Endothelial cell of umbilical vein (primary cell): ENCODE measurements at regions of chr18 and their contacts with region 1.

Region 1: DNA sequence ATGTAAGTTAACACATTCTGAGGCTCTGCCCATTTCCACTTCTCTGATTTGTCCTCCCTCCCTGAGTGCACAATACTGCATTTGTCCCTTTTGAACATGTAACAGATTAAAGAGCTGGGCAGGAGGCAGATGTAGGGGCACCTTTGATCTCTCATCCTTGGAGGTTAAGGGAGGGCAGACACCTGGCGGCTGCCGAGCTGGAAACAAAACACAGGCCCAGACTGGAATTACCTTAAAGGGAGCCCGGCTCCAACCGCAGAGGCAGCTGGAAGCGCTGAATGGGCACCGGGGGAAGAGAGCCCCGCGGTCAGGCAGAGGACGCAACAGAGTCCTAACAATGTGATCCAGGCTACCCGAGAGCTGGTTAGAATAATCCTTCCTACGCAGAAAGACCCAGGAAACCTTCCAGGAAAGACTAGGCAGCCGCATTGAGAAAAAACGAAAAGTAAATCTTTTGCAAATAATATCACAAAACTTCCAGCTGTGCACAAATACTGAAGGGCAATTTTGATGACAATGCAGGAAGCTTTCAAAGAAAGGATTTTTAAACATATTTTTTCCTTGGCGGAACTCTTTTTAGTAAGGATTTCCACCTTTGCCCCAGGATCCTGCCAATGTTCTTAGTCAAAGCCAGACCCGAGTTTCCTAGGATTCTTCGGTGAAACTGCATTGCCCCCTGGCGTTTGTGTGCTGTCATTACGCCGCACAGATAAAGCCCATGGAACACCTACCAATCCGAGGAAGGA is 216.0 kb downstream of the TGIF1 start:
- DNase-seq: peak; percentile 90
- H3K4me3 ChIP-seq: peak overlapping the region in 1 of 3 experiments; percentile 34
- H3K27ac ChIP-seq: peak overlapping the region; percentile 90
- H3K4me1 ChIP-seq: peaks cover 16% of the 10 kb centered on the region
- H3K27me3 ChIP-seq: no peaks in the 10 kb centered on the region
- CTCF ChIP-seq: peak; percentile 86 to 91
- POLR2A ChIP-seq: no peak

Region 2: GRCh38 chr18:3297025-3297984 is 368.6 kb before region 1 on chr18:
- CTCF ChIA-PET with region 1: interaction called, 14 read pairs
- POLR2A ChIA-PET with region 1: no interaction called
- dilution Hi-C with region 1: no loop called
- intact Hi-C with region 1: no loop called
- DNase-seq: peak; percentile 57
- H3K4me3 ChIP-seq: peak overlapping the region in 2 of 3 experiments; percentile 53 to 54
- H3K27ac ChIP-seq: no peak overlapping the region
- H3K4me1 ChIP-seq: no peaks in the 10 kb centered on the region
- H3K27me3 ChIP-seq: peaks cover 0 to 10% of the 10 kb centered on the region in 2 experiments
- CTCF ChIP-seq: peak; percentile 64 to 67
- POLR2A ChIP-seq: no peak

Region 3: DNA sequence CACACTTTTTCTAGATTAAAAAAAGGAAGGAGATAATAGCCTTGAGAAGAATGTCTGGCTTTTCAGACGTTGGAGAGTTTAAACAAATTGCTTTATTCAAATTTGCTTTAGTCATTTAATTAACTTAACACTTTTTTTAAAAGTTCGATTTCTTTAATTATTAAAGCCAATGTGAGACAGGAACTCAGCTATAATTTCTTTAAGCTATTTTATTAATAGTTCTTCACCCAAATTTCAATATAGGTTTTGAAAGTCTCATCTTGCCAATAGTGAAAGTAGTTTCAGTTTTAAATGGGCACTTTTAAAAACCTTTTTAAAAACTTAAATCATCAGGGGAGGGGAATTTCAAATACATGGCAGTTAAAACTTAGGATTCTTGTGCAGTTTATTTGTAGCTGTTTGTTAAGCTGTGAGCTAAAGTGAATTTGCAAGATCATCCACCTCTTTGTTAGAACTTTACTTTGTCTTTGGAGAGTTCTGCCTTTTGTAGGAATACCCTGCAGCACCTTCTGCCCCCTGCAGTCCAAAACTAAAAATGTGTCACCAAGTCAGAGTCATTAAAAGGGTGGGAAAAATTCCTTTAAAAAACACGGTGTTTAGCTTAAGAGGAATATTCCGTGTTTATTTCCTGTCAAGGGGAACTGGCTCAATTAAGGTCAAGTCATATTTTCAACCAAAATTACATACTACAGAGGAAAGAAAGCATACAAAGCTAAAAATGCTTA is 211.4 kb before region 1 on chr18:
- CTCF ChIA-PET with region 1: interaction called, 58 read pairs
- POLR2A ChIA-PET with region 1: interaction called, 6 read pairs
- dilution Hi-C with region 1: no loop called
- intact Hi-C with region 1: loop called (anchors 1 kb)
- DNase-seq: peak; percentile 95
- H3K4me3 ChIP-seq: peak overlapping the region; percentile 43 to 92 (median 90)
- H3K27ac ChIP-seq: peak overlapping the region; percentile 98
- H3K4me1 ChIP-seq: peaks cover 54% of the 10 kb centered on the region
- H3K27me3 ChIP-seq: no peaks in the 10 kb centered on the region
- CTCF ChIP-seq: peak; percentile 51 to 60
- POLR2A ChIP-seq: no peak

Region 4: GRCh38 chr18:3604498-3605408 is 61.2 kb before region 1 on chr18:
- CTCF ChIA-PET with region 1: interaction called, 58 read pairs
- POLR2A ChIA-PET with region 1: interaction called, 37 read pairs
- dilution Hi-C with region 1: no loop called
- intact Hi-C with region 1: loop called (anchors 1 kb)
- DNase-seq: peak; percentile 90
- H3K4me3 ChIP-seq: peak overlapping the region; percentile 41 to 95 (median 83)
- H3K27ac ChIP-seq: peak overlapping the region; percentile 96
- H3K4me1 ChIP-seq: peaks cover 43% of the 10 kb centered on the region
- H3K27me3 ChIP-seq: no peaks in the 10 kb centered on the region
- CTCF ChIP-seq: no peak
- POLR2A ChIP-seq: peak; percentile 32

Region 5: DNA sequence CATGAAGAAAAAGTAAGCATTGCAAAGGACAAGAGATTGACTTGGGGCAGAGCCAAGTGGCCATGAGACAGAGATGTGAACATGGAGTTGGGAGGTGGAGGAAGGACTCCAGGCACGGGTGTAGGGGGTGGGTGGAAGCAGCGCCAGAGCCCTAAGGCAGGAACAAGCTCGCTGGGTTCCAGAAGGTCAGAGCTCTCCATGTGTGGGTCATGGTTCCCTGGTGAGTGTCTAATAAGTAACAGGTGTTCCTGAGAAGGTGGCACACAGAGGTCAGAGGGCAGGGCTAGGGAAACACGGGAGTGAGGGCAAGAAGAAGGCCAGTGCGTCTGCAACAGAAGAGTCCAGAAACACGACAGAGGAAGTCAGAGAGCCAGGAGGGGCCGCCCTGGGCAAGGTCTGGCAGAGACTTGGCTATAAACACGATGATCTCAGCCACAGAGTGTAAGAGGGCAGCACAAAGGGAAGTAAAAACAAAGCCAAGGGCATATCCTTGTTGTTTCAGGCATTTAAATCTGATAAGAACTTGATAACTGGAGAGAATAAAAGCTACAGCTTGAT is 44.8 kb after region 1 on chr18:
- CTCF ChIA-PET with region 1: interaction called, 18 read pairs
- POLR2A ChIA-PET with region 1: no interaction called
- dilution Hi-C with region 1: no loop called
- intact Hi-C with region 1: no loop called
- DNase-seq: peak; percentile 96
- H3K4me3 ChIP-seq: no peak overlapping the region
- H3K27ac ChIP-seq: peak overlapping the region; percentile 90
- H3K4me1 ChIP-seq: peaks cover 27% of the 10 kb centered on the region
- H3K27me3 ChIP-seq: no peaks in the 10 kb centered on the region
- CTCF ChIP-seq: no peak
- POLR2A ChIP-seq: peak; percentile 93

Region 6: DNA sequence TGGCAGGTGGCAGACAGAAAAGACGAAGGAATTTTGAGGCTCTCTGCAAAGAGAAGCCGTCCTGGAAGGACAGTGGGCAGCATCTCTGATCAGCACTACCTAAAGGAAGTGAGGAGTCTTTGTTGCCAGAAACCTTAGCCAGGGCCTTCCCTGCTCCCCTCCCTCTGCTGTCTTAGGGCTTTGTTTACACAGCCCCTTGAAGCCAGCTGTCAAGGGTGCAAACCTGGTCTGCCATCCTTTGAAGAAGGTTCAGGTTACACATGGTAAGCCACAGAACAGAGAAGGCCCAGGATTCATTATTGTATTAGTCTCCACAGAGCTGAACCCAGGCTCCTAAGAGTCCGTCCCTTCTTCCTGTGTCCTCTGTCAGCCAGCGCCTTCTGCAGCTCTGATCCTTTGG is 140.7 kb after region 1 on chr18:
- CTCF ChIA-PET with region 1: no interaction called
- POLR2A ChIA-PET with region 1: no interaction called
- dilution Hi-C with region 1: no loop called
- intact Hi-C with region 1: no loop called
- DNase-seq: no peak
- H3K4me3 ChIP-seq: no peak overlapping the region
- H3K27ac ChIP-seq: no peak overlapping the region
- H3K4me1 ChIP-seq: no peaks in the 10 kb centered on the region
- H3K27me3 ChIP-seq: peaks cover 0 to 3% of the 10 kb centered on the region in 2 experiments
- CTCF ChIP-seq: no peak
- POLR2A ChIP-seq: no peak

Region 7: DNA sequence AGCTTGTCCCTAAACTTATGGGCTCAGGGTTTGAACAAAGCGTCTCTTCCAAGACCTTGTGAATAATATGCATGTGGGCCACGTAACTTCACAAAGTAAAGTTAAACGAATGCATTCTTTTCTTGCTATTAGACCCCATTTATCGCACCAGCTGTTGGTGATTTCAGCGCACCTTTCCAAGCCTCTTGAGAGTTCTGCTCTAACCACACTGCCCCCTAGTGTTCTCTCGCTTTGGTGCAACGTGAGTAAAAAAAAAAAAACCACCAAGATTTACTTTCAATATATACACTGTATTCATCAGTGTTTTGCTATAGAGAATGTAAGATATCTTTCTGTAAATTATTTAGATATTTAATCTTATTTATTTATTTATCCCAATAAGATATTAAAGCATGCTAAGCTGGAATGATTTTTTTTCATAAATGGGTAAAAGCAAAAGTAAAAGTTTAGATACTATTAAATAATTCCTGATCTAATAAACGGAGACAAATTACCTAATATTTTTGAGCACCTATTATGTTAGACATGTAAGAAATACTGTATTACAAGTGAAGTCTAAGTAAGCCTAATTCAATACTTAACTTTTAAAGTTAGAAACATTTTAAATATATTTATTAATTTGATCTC is 329.6 kb after region 1 on chr18:
- CTCF ChIA-PET with region 1: interaction called, 19 read pairs
- POLR2A ChIA-PET with region 1: no interaction called
- dilution Hi-C with region 1: no loop called
- intact Hi-C with region 1: loop called (anchors 1 kb)
- DNase-seq: peak; percentile 78
- H3K4me3 ChIP-seq: no peak overlapping the region
- H3K27ac ChIP-seq: no peak overlapping the region
- H3K4me1 ChIP-seq: no peaks in the 10 kb centered on the region
- H3K27me3 ChIP-seq: no peaks in the 10 kb centered on the region
- CTCF ChIP-seq: peak; percentile 75 to 85
- POLR2A ChIP-seq: no peak